ENCODE measurements at regions of chr11 and their contacts with region 1.

Region 1: DNA sequence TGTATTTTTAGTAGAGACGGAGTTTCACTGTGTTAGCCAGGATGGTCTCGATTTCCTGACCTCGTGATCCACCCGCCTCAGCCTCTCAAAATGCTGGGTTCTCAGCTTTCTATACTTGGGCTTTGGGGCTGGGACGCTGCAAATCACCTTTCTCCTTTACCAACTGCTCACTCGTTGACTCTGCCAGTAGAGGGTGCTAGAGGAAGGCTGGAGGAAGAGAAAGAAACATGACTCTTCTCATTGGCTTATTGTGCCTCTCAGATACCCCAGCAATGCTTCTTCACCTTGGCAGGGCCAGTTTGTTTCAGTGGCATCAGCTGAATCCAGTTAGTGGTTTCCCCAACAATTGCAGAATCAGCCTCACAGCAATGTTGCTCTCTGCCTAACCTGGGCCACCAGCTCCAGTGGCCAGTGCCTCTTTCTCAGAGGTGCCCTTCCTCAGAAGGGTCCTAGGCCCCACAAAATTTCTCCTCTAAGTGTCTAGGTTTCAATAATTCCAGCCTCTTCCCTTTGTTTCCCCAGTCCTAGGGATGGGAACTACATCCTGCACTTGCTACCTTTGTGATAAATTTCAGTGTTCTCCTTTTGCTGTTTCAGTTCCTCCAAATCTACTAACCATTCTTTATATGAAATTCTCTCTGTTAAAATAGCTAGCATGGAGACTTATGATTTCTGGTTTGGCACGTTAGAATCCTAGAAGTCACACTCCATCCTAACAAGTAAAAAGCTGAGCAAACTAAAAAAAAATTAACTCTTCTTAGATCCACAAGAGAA is 71.5 kb upstream of the VSTM5 start:
- DNase-seq: peak; percentile 48
- H3K4me3 ChIP-seq: no peak overlapping the region
- H3K27ac ChIP-seq: no peak overlapping the region
- H3K4me1 ChIP-seq: no peaks in the 10 kb centered on the region
- H3K27me3 ChIP-seq: no peaks in the 10 kb centered on the region
- CTCF ChIP-seq: peak; percentile 49

Region 2: GRCh38 chr11:94046796-94047195 is 124.9 kb after region 1 on chr11:
- intact Hi-C with region 1: no loop called
- DNase-seq: no peak
- H3K4me3 ChIP-seq: no peak overlapping the region
- H3K27ac ChIP-seq: no peak overlapping the region
- H3K4me1 ChIP-seq: no peaks in the 10 kb centered on the region
- H3K27me3 ChIP-seq: no peaks in the 10 kb centered on the region
- CTCF ChIP-seq: no peak

Region 3: DNA sequence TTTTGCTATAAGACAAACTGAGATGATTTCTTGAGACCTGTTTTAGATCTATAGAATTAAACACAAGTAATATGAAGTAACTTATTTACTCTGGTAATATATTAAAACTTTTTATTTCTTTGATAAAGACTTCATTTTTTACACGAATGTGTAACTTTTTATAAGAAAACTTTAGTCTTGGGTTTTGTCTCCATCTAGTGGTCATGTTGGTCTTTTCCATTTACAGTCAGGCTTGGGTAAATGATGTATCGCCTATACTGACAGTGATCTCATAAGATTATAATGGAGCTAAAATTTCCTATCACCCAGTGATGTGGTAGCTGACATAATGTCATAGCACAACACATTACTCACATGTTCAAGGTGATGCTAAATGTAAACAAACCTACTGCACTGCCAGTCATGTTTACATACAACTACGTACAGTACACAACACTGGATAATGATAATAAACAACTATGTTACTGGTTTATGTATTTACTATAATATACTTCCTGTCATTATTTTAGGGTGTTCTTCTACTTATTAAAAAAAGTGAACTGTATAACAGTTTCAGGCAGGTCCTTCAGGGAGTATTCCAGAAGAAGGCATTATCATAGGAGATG is 582.9 kb after region 1 on chr11:
- intact Hi-C with region 1: loop called (anchors 10 kb)
- DNase-seq: no peak
- H3K4me3 ChIP-seq: no peak overlapping the region
- H3K27ac ChIP-seq: no peak overlapping the region
- H3K4me1 ChIP-seq: no peaks in the 10 kb centered on the region
- H3K27me3 ChIP-seq: no peaks in the 10 kb centered on the region
- CTCF ChIP-seq: peak; percentile 60